ENCODE measurements at regions of chr1 and their contacts with region 1.

Region 1: GRCh38 chr1:24635195-24635843 is 7.8 kb upstream of the SRRM1 start:
- DNase-seq: no peak
- ATAC-seq: peak; percentile 88

Region 2: DNA sequence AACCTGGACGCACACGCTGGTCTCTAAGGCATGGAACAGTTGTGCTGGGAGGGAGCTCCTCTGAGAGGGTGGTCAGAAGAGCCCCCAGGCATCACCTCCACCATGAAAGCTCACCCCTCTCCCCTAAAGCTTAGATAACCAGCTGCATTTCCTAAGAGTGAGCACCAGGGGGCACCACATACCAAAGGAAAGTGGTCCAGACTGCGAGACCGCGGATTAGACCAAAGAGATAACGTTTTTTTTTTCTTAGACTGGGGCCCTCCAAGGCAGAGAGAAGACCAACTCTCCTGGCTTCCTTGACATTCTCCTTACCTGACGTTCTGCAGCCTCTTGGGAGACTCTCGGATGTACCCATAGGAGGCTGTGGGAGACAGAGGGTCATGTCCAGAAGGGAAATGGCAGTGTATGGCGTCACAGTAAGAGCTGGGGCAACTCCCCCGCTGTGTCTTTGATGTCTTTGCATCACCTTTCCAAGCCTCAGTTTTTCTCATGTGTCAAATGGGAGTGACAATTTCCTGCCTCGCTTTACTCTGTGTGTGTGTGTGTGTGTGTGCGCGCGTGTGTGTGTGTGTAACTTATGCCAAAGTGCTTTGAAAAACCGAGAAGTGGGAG is 435.9 kb before region 1 on chr1:
- intact Hi-C with region 1: loop called in 1 of 2 experiments (anchors 10 kb)
- DNase-seq: peak in 1 of 2 donors; percentile 55
- ATAC-seq: no peak

Measured in left colon (tissue), 2 donors.